Aorta (tissue), 5 donors: ENCODE measurements at regions of chr2 and their contacts with region 1.

Region 1: GRCh38 chr2:127707890-127708648 is 6.8 kb downstream of the SFT2D3 start:
- DNase-seq: no peak
- ATAC-seq: no peak
- H3K4me3 ChIP-seq: no peak overlapping the region
- H3K27ac ChIP-seq: no peak overlapping the region
- H3K4me1 ChIP-seq: no peaks in the 10 kb centered on the region
- H3K27me3 ChIP-seq: no peaks in the 10 kb centered on the region

Region 2: DNA sequence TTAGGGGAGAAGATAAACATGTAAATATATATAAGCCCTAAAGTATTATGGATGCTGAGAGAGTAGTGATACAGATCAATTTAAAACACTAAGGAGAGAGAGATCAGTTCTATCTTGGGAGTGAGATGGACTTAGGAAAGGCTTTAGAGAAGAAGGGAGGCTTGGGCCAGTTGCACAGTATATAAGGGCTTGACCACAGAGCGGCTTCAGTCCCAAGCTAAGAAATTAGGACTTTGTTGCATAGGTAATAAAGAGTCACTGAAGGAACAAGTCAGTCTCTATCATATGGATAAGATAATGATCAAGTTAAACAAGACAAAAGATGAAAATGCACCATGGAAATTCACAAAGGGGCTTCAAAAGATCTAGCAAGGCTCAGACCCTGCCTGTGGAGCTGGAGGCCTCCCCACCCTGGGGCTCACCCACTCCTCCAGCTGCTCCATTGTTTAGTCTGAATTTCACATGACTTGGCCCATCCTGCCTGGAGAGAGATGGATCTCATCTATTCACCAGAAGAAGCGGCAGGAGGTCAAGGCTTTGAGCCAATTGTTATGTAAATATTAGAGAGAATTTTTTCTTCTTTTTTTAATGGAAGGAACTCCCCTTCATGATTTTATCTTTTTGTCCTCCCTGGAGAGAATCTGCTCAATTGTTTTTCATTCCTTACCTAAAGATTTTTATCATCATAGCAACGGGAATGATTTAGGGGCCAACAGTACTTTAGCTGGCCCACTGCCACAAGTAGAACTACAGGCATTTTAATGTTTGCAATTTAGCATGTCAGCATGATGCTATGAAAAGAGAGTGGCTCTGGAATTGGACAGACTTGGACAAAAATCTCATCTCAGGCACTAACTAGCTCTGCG is 1008.1 kb before region 1 on chr2:
- intact Hi-C with region 1: no loop called
- DNase-seq: no peak
- ATAC-seq: no peak
- H3K4me3 ChIP-seq: no peak overlapping the region
- H3K27ac ChIP-seq: no peak overlapping the region
- H3K4me1 ChIP-seq: no peaks in the 10 kb centered on the region
- H3K27me3 ChIP-seq: no peaks in the 10 kb centered on the region

Region 3: GRCh38 chr2:127508631-127509034 is 199.4 kb before region 1 on chr2:
- intact Hi-C with region 1: loop called in 1 of 2 experiments (anchors 5 kb)
- DNase-seq: peak; percentile 83 to 90
- ATAC-seq: peak; percentile 93
- H3K4me3 ChIP-seq: no peak overlapping the region
- H3K27ac ChIP-seq: no peak overlapping the region
- H3K4me1 ChIP-seq: peaks cover 0 to 7% of the 10 kb centered on the region in 2 donors
- H3K27me3 ChIP-seq: no peaks in the 10 kb centered on the region

Region 4: DNA sequence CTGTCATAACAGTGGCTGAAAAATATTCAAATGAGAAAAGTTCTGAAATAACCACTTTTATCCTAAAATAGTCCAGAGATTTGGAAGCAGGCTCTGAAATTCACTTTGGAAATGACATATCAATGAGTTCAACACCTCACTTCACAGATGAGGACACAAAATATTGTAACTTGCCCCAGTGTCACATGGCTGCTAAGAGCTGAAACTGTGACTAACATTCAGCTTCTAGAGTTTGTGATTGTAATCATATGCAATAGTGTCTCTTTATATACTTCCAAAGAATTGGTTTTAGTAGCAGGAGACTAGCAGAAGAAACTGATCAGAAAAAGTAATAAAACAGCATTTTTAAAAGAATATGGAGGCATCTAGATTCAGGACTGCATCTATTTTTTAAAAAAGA is 45.3 kb after region 1 on chr2:
- intact Hi-C with region 1: no loop called
- DNase-seq: no peak
- ATAC-seq: no peak
- H3K4me3 ChIP-seq: no peak overlapping the region
- H3K27ac ChIP-seq: no peak overlapping the region
- H3K4me1 ChIP-seq: no peaks in the 10 kb centered on the region
- H3K27me3 ChIP-seq: no peaks in the 10 kb centered on the region